ENCODE measurements at regions of chr11 and their contacts with region 1.

Region 1: GRCh38 chr11:131504199-131504949 is 134.0 kb downstream of the NTM start:
- DNase-seq: no peak
- ATAC-seq: no peak
- H3K4me3 Mint-ChIP-seq: no peak overlapping the region
- H3K27ac Mint-ChIP-seq: no peak overlapping the region
- H3K4me1 Mint-ChIP-seq: no peaks in the 10 kb centered on the region
- H3K27me3 Mint-ChIP-seq: peaks cover 6% of the 10 kb centered on the region

Region 2: DNA sequence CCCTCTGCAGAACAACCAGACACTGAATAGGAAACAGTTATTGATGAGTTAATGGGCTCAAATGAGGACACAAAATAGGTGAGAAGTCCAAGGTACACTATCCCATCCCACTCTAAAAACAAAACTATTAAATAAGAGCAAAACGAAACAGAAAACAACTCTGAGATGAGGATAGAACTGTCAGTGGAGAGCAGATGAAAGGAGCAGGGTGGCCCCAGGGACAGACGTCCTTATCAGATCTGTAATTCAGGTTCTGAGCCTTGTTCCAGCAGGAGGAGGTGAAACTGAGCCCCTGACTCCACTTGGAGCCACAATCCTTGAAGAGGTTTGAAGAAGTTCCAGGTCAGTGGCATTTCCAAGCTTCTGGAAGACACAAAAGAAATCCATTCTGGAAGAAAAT is 579.6 kb before region 1 on chr11:
- CTCF ChIA-PET with region 1: no interaction called
- POLR2A ChIA-PET with region 1: no interaction called
- intact Hi-C with region 1: loop called in 1 of 2 experiments (anchors 5 kb)
- DNase-seq: no peak
- ATAC-seq: no peak
- H3K4me3 Mint-ChIP-seq: no peak overlapping the region
- H3K27ac Mint-ChIP-seq: no peak overlapping the region
- H3K4me1 Mint-ChIP-seq: no peaks in the 10 kb centered on the region
- H3K27me3 Mint-ChIP-seq: peaks cover 11% of the 10 kb centered on the region

Region 3: GRCh38 chr11:131378931-131379330 is 125.4 kb before region 1 on chr11:
- CTCF ChIA-PET with region 1: no interaction called
- POLR2A ChIA-PET with region 1: no interaction called
- intact Hi-C with region 1: no loop called
- DNase-seq: no peak
- ATAC-seq: no peak
- H3K4me3 Mint-ChIP-seq: no peak overlapping the region
- H3K27ac Mint-ChIP-seq: no peak overlapping the region
- H3K4me1 Mint-ChIP-seq: no peaks in the 10 kb centered on the region
- H3K27me3 Mint-ChIP-seq: peaks cover 3% of the 10 kb centered on the region